ENCODE measurements at regions of chr15 and their contacts with region 1.

Region 1: GRCh38 chr15:95857124-95857757 is 473.3 kb upstream of the NR2F2 start:
- DNase-seq: no peak
- ATAC-seq: no peak
- H3K4me3 ChIP-seq: no peak overlapping the region
- H3K4me3 Mint-ChIP-seq: no peak overlapping the region
- H3K27ac ChIP-seq: no peak overlapping the region
- H3K27ac Mint-ChIP-seq: no peak overlapping the region
- H3K4me1 ChIP-seq: no peaks in the 10 kb centered on the region
- H3K4me1 Mint-ChIP-seq: no peaks in the 10 kb centered on the region
- H3K27me3 ChIP-seq: no peaks in the 10 kb centered on the region
- H3K27me3 Mint-ChIP-seq: no peaks in the 10 kb centered on the region
- CTCF ChIP-seq: no peak

Region 2: DNA sequence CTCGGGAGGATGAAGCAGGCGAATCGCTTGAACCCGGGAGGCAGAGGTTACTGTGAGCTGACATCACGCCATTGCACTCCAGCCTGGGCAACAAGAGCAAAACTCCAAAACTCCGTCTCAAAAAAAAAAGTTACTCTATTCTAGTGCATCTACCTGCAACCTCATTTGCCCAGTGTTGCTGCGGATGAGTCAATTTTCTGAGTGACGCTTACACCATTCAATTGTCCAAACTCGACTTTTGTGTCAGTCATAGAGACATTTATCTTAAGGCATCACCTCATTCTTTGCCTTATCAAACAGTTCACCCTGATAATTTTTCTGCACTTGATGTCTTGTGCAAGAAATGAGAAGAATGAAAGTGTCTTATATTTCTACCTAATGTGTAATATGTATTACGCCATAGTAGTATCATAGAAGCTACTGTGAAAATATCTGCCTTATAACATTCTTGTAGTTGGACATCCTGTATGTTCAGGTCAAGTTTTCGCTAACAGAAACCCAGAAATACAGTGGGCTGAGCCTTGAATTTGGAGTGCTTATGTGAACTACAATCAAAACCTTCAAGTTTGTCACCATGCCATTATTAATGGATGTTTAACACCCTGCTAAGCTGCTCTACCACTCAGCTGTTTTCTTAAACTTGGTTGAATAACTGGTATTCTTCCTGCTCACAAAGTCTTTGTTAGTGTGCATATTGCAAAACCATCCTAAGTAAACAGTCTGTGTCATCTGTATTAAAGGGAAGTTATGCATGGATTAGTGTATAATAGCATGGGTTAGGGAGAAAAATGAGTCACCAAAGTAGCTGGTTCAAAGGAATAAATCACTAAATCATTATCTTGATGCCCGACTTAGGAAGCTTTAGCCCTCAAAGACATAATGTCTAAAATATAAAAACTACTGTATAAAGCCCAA is 57.7 kb before region 1 on chr15:
- CTCF ChIA-PET with region 1: no interaction called
- POLR2A ChIA-PET with region 1: no interaction called
- intact Hi-C with region 1: loop called in 1 of 2 experiments (anchors 10 kb)
- DNase-seq: no peak
- ATAC-seq: no peak
- H3K4me3 ChIP-seq: no peak overlapping the region
- H3K4me3 Mint-ChIP-seq: no peak overlapping the region
- H3K27ac ChIP-seq: no peak overlapping the region
- H3K27ac Mint-ChIP-seq: no peak overlapping the region
- H3K4me1 ChIP-seq: no peaks in the 10 kb centered on the region
- H3K4me1 Mint-ChIP-seq: peaks cover 9% of the 10 kb centered on the region
- H3K27me3 ChIP-seq: no peaks in the 10 kb centered on the region
- H3K27me3 Mint-ChIP-seq: no peaks in the 10 kb centered on the region
- CTCF ChIP-seq: no peak

Region 3: GRCh38 chr15:95912066-95912625 is 54.9 kb after region 1 on chr15:
- CTCF ChIA-PET with region 1: no interaction called
- POLR2A ChIA-PET with region 1: no interaction called
- intact Hi-C with region 1: loop called in 1 of 2 experiments (anchors 10 kb)
- DNase-seq: no peak
- ATAC-seq: no peak
- H3K4me3 ChIP-seq: no peak overlapping the region
- H3K4me3 Mint-ChIP-seq: no peak overlapping the region
- H3K27ac ChIP-seq: no peak overlapping the region
- H3K27ac Mint-ChIP-seq: no peak overlapping the region
- H3K4me1 ChIP-seq: no peaks in the 10 kb centered on the region
- H3K4me1 Mint-ChIP-seq: no peaks in the 10 kb centered on the region
- H3K27me3 ChIP-seq: no peaks in the 10 kb centered on the region
- H3K27me3 Mint-ChIP-seq: no peaks in the 10 kb centered on the region
- CTCF ChIP-seq: no peak

Measured in CD4-positive, alpha-beta T cell (primary cell).